HepG2 (cell line): ENCODE measurements at regions of chr12 and their contacts with region 1.

Region 1: GRCh38 chr12:20798561-20798960 is 11.9 kb upstream of the SLCO1B3 start:
- DNase-seq: peak; percentile 46
- ATAC-seq: peak; percentile 90
- H3K4me3 ChIP-seq: no peak overlapping the region
- H3K27ac ChIP-seq: no peak overlapping the region
- H3K4me1 ChIP-seq: no peaks in the 10 kb centered on the region
- H3K27me3 ChIP-seq: no peaks in the 10 kb centered on the region
- CTCF ChIP-seq: peak; percentile 71
- EP300 ChIP-seq: no peak
- POLR2A ChIP-seq: no peak
- RAD21 ChIP-seq: peak; percentile 61

Region 2: DNA sequence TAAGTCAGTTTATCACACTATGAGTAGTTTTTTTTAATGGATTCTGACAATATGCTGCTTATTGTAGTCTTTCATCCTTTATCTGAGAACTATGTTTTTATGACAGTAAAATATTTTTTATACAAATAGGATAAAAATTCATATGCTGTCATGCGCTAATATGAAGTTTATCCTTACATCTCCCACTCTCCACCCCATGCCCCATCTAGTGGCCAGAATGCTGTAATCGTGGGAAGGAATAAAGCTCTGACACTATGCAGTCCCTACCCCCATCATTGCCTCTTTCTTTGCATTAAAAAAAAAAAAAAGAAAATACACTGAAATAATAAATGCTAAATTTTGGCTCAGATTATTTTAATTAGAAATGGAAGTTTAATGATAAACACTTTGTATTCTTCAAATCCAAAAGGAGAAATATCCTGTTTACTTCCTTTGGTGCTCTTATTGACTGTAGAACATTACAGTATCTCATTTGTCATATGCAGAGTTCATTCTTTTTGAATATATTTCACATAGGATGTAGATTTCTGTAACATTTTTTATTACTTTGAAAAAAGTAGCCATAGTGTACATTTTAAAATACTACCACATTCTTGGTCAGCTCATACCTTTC is 249.3 kb before region 1 on chr12:
- CTCF ChIA-PET with region 1: no interaction called
- POLR2A ChIA-PET with region 1: no interaction called
- in situ Hi-C with region 1: no loop called
- intact Hi-C with region 1: loop called (anchors 1 kb)
- DNase-seq: peak; percentile 4
- ATAC-seq: peak; percentile 76
- H3K4me3 ChIP-seq: no peak overlapping the region
- H3K27ac ChIP-seq: no peak overlapping the region
- H3K4me1 ChIP-seq: no peaks in the 10 kb centered on the region
- H3K27me3 ChIP-seq: no peaks in the 10 kb centered on the region
- CTCF ChIP-seq: peak; percentile 45
- EP300 ChIP-seq: no peak
- POLR2A ChIP-seq: no peak
- RAD21 ChIP-seq: no peak